ENCODE measurements at regions of chr2 and their contacts with region 1.

Region 1: GRCh38 chr2:108621087-108621559 is 86.9 kb downstream of the LIMS1 start:
- DNase-seq: peak; percentile 85
- H3K4me3 ChIP-seq: peak overlapping the region; percentile 34 to 50 (median 37)
- H3K27ac ChIP-seq: peak overlapping the region; percentile 80
- H3K4me1 ChIP-seq: peaks cover 37% of the 10 kb centered on the region
- H3K27me3 ChIP-seq: no peaks in the 10 kb centered on the region
- CTCF ChIP-seq: no peak

Region 2: DNA sequence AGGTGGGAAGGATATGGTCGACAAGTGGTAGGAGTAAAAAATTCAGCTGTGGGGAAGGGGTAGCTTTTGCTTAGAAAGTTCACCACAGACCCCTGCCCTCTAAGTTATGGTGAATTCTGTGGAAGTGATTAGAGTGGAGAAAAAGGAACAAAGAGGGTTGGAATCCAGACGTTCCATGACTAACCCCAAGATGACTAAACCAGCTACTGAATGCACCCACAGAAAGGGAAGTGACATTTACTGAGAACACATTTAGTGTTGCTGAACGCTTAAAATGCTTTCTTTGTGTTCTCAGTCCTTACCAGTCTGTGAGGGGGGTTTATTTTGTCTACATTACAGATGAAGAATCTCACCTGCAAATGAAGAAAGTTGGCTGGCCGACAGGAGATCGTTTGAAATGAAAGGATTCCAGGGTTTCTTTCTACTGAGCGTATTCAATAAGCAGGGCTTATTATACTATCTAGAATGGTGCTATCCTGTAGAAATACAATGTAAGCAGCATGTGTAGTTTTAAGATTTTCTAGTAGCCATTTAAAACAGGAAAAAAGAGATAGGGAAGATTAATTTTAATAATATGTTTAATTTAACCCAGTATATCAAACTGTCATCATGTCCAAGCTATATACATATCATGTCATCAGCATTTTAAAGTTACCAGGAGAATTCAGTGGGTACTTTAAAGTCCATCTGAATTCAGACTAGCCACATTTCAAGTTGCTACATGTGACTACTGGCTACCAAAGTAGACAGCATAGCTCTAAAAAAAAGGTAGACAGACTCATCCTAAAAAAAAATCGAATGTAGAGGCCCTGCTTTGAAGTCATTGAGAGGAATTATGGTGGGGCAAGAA is 26.8 kb before region 1 on chr2:
- CTCF ChIA-PET with region 1: no interaction called
- dilution Hi-C with region 1: no loop called
- in situ Hi-C with region 1: no loop called
- intact Hi-C with region 1: loop called (anchors 1 kb)
- DNase-seq: peak; percentile 91
- H3K4me3 ChIP-seq: peak overlapping the region; percentile 22 to 38 (median 24)
- H3K27ac ChIP-seq: peak overlapping the region; percentile 98
- H3K4me1 ChIP-seq: peaks cover 44% of the 10 kb centered on the region
- H3K27me3 ChIP-seq: no peaks in the 10 kb centered on the region
- CTCF ChIP-seq: no peak